ENCODE measurements at regions of chr6 and their contacts with region 1.

Region 1: DNA sequence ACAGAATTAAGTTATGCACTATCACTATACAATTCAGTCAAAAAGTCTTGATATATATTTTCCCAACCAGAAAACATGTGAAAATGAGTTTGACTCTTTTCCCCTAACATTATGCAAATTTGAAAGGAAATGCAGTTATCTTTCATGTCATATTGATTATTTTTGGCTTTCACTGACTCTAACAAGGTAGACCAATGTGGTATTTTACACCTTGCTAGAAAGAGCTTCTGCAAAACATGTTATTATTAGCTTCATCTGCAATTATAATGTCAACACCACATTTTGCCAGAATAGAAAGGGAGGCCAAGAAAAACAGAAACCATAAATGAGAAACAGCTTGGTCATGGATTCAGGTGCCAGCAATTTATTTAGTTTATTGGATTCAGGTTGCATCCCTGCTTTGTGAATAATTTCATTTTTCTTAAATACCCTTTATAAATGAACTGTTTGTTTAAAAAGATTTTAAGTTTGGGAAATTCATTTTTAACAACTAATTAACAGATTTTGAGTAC is 226.1 kb upstream of the GJE1 start:
- DNase-seq: no peak
- H3K4me3 ChIP-seq: no peak overlapping the region
- H3K4me3 Mint-ChIP-seq: no peak overlapping the region
- H3K27ac ChIP-seq: no peak overlapping the region
- H3K27ac Mint-ChIP-seq: no peak overlapping the region
- H3K4me1 ChIP-seq: no peaks in the 10 kb centered on the region
- H3K4me1 Mint-ChIP-seq: no peaks in the 10 kb centered on the region
- H3K27me3 ChIP-seq: no peaks in the 10 kb centered on the region
- H3K27me3 Mint-ChIP-seq: no peaks in the 10 kb centered on the region

Region 2: GRCh38 chr6:141925001-141925400 is 18.4 kb after region 1 on chr6:
- CTCF ChIA-PET with region 1: no interaction called
- POLR2A ChIA-PET with region 1: no interaction called
- intact Hi-C with region 1: loop called (anchors 2 kb)
- DNase-seq: no peak
- H3K4me3 ChIP-seq: no peak overlapping the region
- H3K4me3 Mint-ChIP-seq: no peak overlapping the region
- H3K27ac ChIP-seq: no peak overlapping the region
- H3K27ac Mint-ChIP-seq: no peak overlapping the region
- H3K4me1 ChIP-seq: no peaks in the 10 kb centered on the region
- H3K4me1 Mint-ChIP-seq: no peaks in the 10 kb centered on the region
- H3K27me3 ChIP-seq: no peaks in the 10 kb centered on the region
- H3K27me3 Mint-ChIP-seq: no peaks in the 10 kb centered on the region